Heart right ventricle (tissue), 16 donors: ENCODE measurements at regions of chr12 and their contacts with region 1.

Region 1: GRCh38 chr12:64610149-64610678 is at the start of gene RASSF3:
- DNase-seq: peak; percentile 77 to 81
- ATAC-seq: peak; percentile 76 to 92 (median 86)
- H3K4me3 ChIP-seq: peak within 1 kb of the TSS; percentile 63 to 99 (median 90)
- H3K27ac ChIP-seq: peak within 1 kb of the TSS; percentile 87 to 99 (median 96)
- H3K4me1 ChIP-seq: peaks cover 0 to 41% (median 31%) of the 10 kb centered on the region in 9 donors
- H3K27me3 ChIP-seq: no peaks in the 10 kb centered on the region
- CTCF ChIP-seq: no peak
- total RNA-seq, gene RASSF3: 55.1 to 159 (median 89.3) TPM

Region 2: DNA sequence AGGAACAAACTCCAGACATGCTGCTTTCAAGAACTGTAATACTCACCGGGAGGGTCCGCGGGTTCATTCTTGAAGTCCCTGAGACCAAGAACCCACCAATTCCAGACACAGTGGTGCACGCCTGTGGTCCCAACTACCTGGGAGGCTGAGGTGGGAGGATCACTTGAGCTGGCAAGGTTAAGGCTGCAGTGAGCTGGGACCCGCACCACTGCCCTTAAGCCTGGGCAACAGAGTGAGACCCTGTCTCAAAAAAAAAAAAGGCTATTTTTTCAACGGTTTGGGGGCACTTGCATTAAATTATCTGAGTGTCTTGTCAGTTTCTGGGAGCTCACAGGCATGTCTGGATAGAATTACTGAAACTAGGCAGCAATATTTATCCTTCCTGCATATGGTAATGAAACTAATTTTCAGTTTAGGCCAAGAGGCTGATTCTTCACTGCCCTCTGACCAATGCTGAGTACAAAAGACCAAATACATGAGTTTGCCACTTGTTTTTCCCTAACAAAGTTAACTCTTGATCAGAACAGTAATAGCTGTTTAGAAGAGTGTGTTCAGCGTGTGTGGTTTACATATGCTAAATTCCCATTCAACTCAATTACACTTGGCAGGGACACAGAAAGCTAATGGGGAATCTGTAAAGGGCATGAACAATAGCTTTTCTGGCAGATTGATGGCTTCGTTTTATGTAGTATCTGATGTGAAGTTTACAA is 65.7 kb before region 1 on chr12:
- intact Hi-C with region 1: loop called in 2 of 10 experiments (anchors 2 to 10 kb)
- DNase-seq: no peak
- ATAC-seq: no peak
- H3K4me3 ChIP-seq: no peak overlapping the region
- H3K27ac ChIP-seq: no peak overlapping the region
- H3K4me1 ChIP-seq: peaks cover 0 to 1% (median 0%) of the 10 kb centered on the region in 9 donors
- H3K27me3 ChIP-seq: peaks cover 0 to 24% (median 0%) of the 10 kb centered on the region in 7 donors
- CTCF ChIP-seq: no peak

Region 3: GRCh38 chr12:64560396-64561304 is 49.6 kb before region 1 on chr12:
- intact Hi-C with region 1: loop called in 3 of 10 experiments (anchors 5 kb)
- DNase-seq: peak in 1 of 2 donors; percentile 18
- ATAC-seq: peak in 7 of 8 donors; percentile 38 to 72 (median 59)
- H3K4me3 ChIP-seq: no peak overlapping the region
- H3K27ac ChIP-seq: no peak overlapping the region
- H3K4me1 ChIP-seq: peaks cover 0 to 14% (median 0%) of the 10 kb centered on the region in 9 donors
- H3K27me3 ChIP-seq: no peaks in the 10 kb centered on the region
- CTCF ChIP-seq: no peak

Region 4: DNA sequence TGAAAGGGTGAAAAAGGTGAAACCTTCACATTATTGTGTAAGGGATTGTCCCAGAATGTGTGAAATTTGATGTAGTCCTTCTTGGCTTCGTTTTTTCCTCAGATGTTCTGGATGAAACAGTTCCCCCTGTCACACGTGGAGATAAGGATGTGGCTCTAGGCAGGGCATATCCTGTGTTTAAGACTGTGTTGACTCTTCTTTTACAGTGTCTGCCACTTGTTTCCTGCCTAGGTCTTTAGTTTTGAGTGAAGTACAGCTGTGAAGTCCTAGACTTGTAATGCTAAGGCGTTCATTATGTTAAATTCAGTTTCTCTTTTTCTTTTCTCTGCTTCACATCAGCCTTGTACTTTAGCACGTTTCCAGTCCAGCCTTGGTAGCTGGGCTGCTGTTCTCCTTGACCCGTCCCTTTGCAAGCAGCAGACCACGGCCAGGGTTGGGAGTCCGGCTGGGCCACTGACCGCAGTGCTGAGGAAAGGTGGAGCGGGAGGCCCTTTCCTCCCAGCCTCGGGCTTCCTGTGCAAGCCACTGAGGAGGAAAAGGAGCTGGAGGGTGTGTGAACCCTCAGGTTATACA is 59.1 kb after region 1 on chr12:
- intact Hi-C with region 1: loop called in 2 of 10 experiments (anchors 5 kb)
- DNase-seq: peak; percentile 56 to 70
- ATAC-seq: peak; percentile 39 to 70 (median 66)
- H3K4me3 ChIP-seq: peak overlapping the region in 5 of 10 donors; percentile 4 to 25 (median 8)
- H3K27ac ChIP-seq: peak overlapping the region; percentile 10 to 89 (median 76)
- H3K4me1 ChIP-seq: peaks cover 38 to 100% (median 97%) of the 10 kb centered on the region in 9 donors
- H3K27me3 ChIP-seq: no peaks in the 10 kb centered on the region
- CTCF ChIP-seq: no peak

Region 5: GRCh38 chr12:64696080-64696741 is 86.0 kb after region 1 on chr12:
- intact Hi-C with region 1: loop called in 8 of 10 experiments (anchors 2 to 10 kb)
- DNase-seq: no peak
- ATAC-seq: peak in 3 of 8 donors; percentile 27 to 56 (median 33)
- H3K4me3 ChIP-seq: no peak overlapping the region
- H3K27ac ChIP-seq: peak overlapping the region in 3 of 10 donors; percentile 36 to 43 (median 41)
- H3K4me1 ChIP-seq: peaks cover 5 to 51% (median 12%) of the 10 kb centered on the region in 9 donors
- H3K27me3 ChIP-seq: no peaks in the 10 kb centered on the region
- CTCF ChIP-seq: peak in 7 of 9 donors; percentile 35 to 66 (median 49)

Region 6: DNA sequence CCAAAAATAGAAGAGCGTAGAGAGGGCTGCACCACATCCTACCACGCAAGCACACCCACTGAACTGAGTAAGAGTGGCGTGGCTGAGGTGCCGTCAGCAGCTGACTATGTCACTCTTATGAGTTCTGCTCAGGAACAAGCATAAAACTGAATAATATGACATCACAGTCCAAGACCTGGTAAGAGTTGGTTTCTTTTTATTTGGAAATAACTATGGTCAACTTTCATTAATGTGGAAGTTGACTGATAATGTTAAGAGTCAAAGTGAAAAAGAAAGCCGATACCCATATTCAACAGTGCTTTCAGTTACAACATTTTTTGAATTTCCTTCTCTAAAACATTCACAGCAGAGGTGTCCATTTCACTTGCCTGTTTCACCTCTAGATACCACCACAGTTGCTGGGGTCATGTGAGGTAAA is 104.3 kb after region 1 on chr12:
- intact Hi-C with region 1: no loop called
- DNase-seq: no peak
- ATAC-seq: peak in 1 of 8 donors; percentile 25
- H3K4me3 ChIP-seq: no peak overlapping the region
- H3K27ac ChIP-seq: peak overlapping the region in 1 of 10 donors; percentile 77
- H3K4me1 ChIP-seq: peaks cover 0 to 34% (median 0%) of the 10 kb centered on the region in 9 donors
- H3K27me3 ChIP-seq: no peaks in the 10 kb centered on the region
- CTCF ChIP-seq: no peak